Heart left ventricle (tissue), 16 donors: ENCODE measurements at regions of chr16 and their contacts with region 1.

Region 1: DNA sequence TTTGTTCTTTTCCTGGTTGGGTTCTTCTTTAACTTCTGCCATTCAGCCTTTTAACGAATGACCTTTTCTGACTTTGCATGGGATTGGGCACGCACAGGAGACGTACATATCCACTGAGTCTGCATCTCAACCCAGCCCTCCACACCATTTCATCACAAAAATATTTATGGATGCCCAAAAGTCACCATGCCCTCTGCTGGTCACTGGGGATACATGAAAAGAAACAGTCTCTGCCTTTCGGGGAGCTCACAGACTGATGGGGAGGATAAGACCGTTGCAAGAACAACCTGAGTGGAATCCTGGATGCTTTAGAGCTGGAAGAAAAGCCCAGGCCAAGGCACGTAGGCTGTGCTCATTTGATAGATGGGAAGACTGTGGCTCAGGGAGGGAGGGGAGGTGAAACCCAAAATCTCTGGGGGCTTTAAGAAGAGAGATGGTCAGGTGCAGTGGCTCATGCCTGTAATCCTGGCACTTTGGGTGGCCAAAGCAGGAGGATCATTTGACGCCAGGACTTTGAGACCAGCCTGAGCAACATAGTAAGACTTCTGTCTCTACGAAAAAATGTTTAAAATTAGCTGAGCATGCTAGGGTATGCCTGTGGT is 7.9 kb upstream of the MT2A start:
- DNase-seq: no peak
- ATAC-seq: peak in 2 of 4 donors; percentile 31 to 46
- H3K4me3 ChIP-seq: no peak overlapping the region
- H3K27ac ChIP-seq: no peak overlapping the region
- H3K4me1 ChIP-seq: peaks cover 0 to 3% (median 0%) of the 10 kb centered on the region in 12 donors
- H3K27me3 ChIP-seq: peaks cover 0 to 4% (median 0%) of the 10 kb centered on the region in 9 donors
- CTCF ChIP-seq: peak; percentile 36 to 61 (median 50)
- POLR2A ChIP-seq: no peak

Region 2: DNA sequence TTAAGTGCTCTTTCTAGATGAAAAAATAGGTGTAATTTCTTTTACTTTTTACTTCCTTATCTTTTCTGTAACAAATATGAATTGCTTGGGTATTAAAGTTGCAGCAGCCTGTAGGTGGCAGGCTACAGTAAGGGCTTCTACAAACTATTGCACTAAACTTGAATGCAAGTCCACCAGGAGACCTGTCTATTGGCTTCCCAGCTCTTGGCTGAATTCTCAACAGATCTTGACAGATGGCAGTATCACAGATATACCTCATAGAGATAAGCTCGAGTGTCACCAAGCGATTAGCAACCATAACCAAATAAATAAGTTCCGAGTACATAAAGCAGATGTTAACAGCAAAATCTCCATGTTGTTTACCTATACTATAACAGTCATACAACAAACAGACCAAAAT is 86.5 kb before region 1 on chr16:
- intact Hi-C with region 1: loop called (anchors 1 to 10 kb)
- DNase-seq: peak in 2 of 5 donors; percentile 30 to 40
- ATAC-seq: peak; percentile 35 to 68 (median 54)
- H3K4me3 ChIP-seq: no peak overlapping the region
- H3K27ac ChIP-seq: no peak overlapping the region
- H3K4me1 ChIP-seq: peaks cover 0 to 44% (median 27%) of the 10 kb centered on the region in 12 donors
- H3K27me3 ChIP-seq: no peaks in the 10 kb centered on the region
- CTCF ChIP-seq: peak; percentile 51 to 80 (median 66)
- POLR2A ChIP-seq: no peak

Region 3: DNA sequence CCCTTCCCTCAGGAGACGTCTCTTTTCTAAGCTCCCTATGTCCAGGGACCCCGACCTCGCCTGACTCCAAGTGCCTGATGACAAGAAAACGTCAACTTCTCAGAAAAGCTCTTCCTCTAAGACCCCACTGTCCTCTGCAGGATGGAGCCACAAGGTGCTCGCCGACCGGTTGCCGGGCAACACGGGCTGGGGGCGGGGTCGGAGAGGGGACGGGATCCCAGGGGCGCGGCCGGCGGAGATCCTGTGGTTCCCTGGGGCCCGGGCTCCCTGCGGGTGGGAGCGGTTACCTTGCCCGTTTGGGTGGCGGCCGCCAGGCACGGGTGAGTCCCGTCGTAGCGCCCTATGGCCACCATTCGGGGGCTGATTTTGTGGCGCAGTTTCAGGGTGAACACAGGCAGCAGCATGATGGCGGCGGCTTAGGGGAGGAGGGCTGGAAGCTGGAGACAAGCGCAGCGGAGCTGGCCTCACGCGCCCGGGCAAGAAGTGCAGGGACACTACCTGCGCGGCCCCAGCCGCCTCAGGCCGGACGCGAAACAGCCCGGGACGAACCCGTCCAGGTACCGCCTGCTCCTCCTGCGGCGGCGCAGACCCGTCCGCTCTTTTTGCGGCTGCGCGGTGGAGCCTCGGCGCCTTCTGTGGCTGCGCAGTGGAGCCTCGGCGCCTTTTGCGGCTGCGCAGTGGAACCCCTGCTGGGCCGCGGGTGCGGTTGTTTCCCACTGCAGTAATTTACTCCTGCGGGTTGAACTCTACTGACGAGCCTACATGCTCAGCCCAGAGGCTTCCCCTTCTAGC is 80.8 kb before region 1 on chr16 and contains the start of gene BBS2:
- intact Hi-C with region 1: loop called (anchors 1 to 10 kb)
- DNase-seq: peak; percentile 91 to 96 (median 93)
- ATAC-seq: peak; percentile 92 to 98 (median 97)
- H3K4me3 ChIP-seq: peak within 1 kb of the TSS; percentile 45 to 100 (median 90)
- H3K27ac ChIP-seq: peak within 1 kb of the TSS; percentile 64 to 94 (median 87)
- H3K4me1 ChIP-seq: peaks cover 0 to 48% (median 32%) of the 10 kb centered on the region in 12 donors
- H3K27me3 ChIP-seq: no peaks in the 10 kb centered on the region
- CTCF ChIP-seq: peak in 2 of 12 donors; percentile 9 to 12
- POLR2A ChIP-seq: peak in 1 of 2 donors; percentile 86
- total RNA-seq, gene BBS2: 31.2 to 76.2 (median 49.4) TPM

Region 4: GRCh38 chr16:56576585-56577293 is 23.8 kb before region 1 on chr16:
- intact Hi-C with region 1: loop called in 1 of 10 experiments (anchors 2 kb)
- DNase-seq: peak; percentile 59 to 84 (median 65)
- ATAC-seq: peak; percentile 47 to 86 (median 74)
- H3K4me3 ChIP-seq: no peak overlapping the region
- H3K27ac ChIP-seq: no peak overlapping the region
- H3K4me1 ChIP-seq: no peaks in the 10 kb centered on the region
- H3K27me3 ChIP-seq: no peaks in the 10 kb centered on the region
- CTCF ChIP-seq: peak; percentile 51 to 82 (median 66)
- POLR2A ChIP-seq: no peak